Activated CD4-positive, alpha-beta memory T cell treated with anti-CD3 and anti-CD28 coated beads, Interleukin-2, amount 10 ng/mL, durations not matched to agents 7 days and 5 days (primary cell): ENCODE measurements at regions of chr14 and their contacts with region 1.

Region 1: DNA sequence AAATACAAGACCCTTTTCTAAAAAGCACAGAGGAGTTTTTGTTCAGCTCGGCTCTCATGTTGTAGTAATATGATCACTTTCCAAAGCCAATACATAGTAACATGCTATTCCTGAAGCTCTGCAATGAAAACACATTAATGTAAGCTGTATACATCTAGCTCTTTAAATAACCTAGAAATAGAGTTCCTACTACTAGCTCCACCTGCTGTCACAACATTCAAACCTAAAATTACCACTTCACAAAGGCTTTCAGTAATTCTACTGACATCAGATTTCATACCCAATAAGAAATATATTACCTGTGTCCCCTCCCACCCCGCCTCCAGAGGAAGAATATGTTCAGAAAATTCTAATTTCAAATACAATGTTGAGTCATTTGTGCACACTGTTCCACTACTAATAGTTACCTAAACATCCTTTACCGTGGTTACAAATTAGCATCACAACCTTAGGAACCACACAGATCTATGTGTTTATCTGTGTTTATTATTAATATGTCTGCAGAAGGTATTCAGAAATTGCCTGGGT is 17.8 kb downstream of the EFCAB11 start:
- DNase-seq: no peak
- H3K4me3 Mint-ChIP-seq: no peak overlapping the region
- H3K27ac Mint-ChIP-seq: no peak overlapping the region
- H3K4me1 Mint-ChIP-seq: no peaks in the 10 kb centered on the region
- H3K27me3 Mint-ChIP-seq: no peaks in the 10 kb centered on the region

Region 2: DNA sequence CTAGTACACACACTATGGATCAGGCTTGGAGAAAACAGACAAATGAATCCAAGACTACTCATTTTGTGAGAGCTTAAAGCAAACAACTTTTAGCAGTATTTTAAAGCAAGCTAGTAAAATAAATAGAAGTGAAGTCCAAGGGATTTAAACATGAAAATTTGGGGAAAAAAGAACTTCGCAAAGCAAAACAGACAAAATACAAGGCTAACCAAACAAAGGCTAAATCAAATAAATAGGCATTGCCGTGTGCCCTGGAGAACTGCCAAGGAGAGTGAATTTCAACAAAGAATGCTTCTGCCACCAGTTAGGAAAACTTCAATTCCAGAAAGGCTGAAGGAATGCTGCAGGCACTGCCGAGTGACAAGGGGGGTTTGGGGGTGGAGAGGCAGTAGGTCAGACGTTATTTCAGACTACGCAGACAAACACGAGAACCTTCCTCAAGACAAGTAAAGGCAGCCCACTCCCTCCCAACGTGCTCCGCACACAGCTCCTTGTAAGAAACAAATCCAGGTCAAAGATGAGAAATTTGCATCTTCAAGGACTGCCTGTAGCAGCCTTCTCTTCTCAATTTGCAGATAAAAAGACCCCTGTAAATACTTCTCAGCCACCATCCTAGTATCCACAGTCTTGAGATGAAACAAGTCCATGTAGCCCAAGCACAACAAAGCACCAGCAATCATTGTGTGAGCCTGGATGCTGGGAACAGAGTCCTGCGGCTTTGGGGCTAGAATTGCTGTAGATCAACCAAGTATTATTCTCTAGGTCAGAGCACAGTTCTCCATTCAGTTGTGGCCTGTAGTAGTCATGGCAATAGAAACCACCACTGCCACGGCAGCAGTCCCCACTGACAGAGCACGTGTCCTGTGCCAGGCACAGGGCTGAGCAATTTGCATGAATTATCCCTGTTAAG is 25.5 kb before region 1 on chr14:
- CTCF ChIA-PET with region 1: no interaction called
- POLR2A ChIA-PET with region 1: no interaction called
- DNase-seq: no peak
- H3K4me3 Mint-ChIP-seq: no peak overlapping the region
- H3K27ac Mint-ChIP-seq: no peak overlapping the region
- H3K4me1 Mint-ChIP-seq: peaks cover 2% of the 10 kb centered on the region
- H3K27me3 Mint-ChIP-seq: peaks cover 7% of the 10 kb centered on the region

Region 3: GRCh38 chr14:89926717-89927116 is 10.0 kb before region 1 on chr14:
- CTCF ChIA-PET with region 1: interaction called, 13 read pairs
- POLR2A ChIA-PET with region 1: interaction called, 3 read pairs
- DNase-seq: no peak
- H3K4me3 Mint-ChIP-seq: no peak overlapping the region
- H3K27ac Mint-ChIP-seq: no peak overlapping the region
- H3K4me1 Mint-ChIP-seq: no peaks in the 10 kb centered on the region
- H3K27me3 Mint-ChIP-seq: no peaks in the 10 kb centered on the region

Region 4: GRCh38 chr14:90235179-90235976 is 298.7 kb after region 1 on chr14:
- CTCF ChIA-PET with region 1: interaction called, 59 read pairs
- POLR2A ChIA-PET with region 1: no interaction called
- DNase-seq: peak; percentile 73
- H3K4me3 Mint-ChIP-seq: no peak overlapping the region
- H3K27ac Mint-ChIP-seq: no peak overlapping the region
- H3K4me1 Mint-ChIP-seq: peaks cover 2% of the 10 kb centered on the region
- H3K27me3 Mint-ChIP-seq: peaks cover 8% of the 10 kb centered on the region